Prostate gland (tissue), 2 donors: ENCODE measurements at regions of chr18 and their contacts with region 1.

Region 1: DNA sequence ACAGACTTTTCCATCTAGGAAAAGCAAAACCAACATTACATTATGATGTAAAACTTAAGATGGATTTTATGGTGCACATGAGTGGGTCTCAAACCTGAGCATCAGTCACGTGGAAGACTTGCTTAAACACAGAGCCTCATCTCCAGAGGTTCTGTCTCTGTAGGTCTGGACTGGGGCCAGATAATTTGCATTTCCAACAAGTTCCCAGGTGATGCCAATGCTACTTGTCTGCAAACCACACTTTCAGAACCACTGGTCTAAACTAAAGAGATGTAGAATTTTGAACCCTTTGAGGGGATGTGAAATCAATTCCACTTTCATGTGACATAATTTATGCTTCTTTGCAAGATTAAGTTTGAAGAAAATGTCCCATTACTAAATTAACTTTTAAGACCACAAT is 522.8 kb downstream of the MBD2 start:
- DNase-seq: no peak
- H3K4me3 ChIP-seq: no peak overlapping the region
- H3K27ac ChIP-seq: no peak overlapping the region
- H3K4me1 ChIP-seq: no peaks in the 10 kb centered on the region
- H3K27me3 ChIP-seq: no peaks in the 10 kb centered on the region
- CTCF ChIP-seq: no peak
- POLR2A ChIP-seq: no peak

Region 2: GRCh38 chr18:54119524-54120019 is 417.9 kb after region 1 on chr18:
- intact Hi-C with region 1: loop called (anchors 10 kb)
- DNase-seq: peak; percentile 14
- H3K4me3 ChIP-seq: no peak overlapping the region
- H3K27ac ChIP-seq: no peak overlapping the region
- H3K4me1 ChIP-seq: no peaks in the 10 kb centered on the region
- H3K27me3 ChIP-seq: no peaks in the 10 kb centered on the region
- CTCF ChIP-seq: peak; percentile 28 to 72 (median 68)
- POLR2A ChIP-seq: no peak